Endothelial cell of umbilical vein (primary cell): ENCODE measurements at regions of chr11 and their contacts with region 1.

Region 1: DNA sequence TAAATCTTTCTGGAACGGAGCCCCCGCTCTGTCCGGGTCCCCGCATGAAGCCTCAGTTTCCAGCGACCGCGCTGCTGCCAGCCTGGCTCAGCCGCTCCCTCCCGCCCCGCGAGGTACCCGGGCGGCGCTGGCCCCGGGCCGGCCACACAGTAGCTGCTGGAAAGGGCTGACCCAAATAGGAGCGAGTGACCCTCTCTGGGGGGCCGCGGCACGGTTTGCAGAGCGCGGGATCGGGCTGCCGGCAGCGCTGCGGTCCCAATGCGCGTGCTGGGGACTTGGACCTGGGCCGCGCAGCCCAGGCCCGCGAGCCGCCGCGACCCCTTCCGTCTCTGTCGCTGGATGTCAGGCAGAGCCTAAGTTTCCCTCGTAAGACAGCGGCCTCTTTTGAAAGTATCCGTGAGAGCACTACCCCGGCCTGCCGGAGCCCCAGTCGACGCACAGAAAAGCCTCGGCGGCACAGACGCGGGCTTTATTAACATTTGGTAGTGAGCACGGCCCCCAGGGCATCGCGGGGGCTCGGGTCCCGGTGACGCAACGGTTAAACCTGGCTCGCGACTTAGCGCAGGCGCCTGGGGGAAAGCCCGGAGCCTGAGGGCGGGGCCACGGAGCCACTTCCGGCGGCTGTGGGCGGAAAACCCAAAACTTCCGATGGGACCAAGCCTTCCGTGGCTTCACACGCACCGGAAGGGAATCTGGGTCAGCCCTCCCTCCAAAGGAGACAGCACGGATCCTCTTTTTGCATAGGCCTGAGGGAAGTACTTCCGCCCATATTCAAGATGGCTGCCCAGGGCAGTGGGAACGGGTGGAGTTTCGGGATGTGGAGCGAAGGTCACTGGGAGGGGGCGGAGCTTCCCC is 14.9 kb downstream of the BAD start:
- DNase-seq: peak; percentile 100
- H3K4me3 ChIP-seq: peak overlapping the region; percentile 1 to 66 (median 58)
- H3K27ac ChIP-seq: peak overlapping the region; percentile 76
- H3K4me1 ChIP-seq: peaks cover 38% of the 10 kb centered on the region
- H3K27me3 ChIP-seq: no peaks in the 10 kb centered on the region
- CTCF ChIP-seq: no peak
- POLR2A ChIP-seq: peak; percentile 73

Region 2: GRCh38 chr11:63791495-63792167 is 478.0 kb before region 1 on chr11:
- CTCF ChIA-PET with region 1: no interaction called
- POLR2A ChIA-PET with region 1: no interaction called
- dilution Hi-C with region 1: no loop called
- intact Hi-C with region 1: no loop called
- DNase-seq: no peak
- H3K4me3 ChIP-seq: no peak overlapping the region
- H3K27ac ChIP-seq: no peak overlapping the region
- H3K4me1 ChIP-seq: no peaks in the 10 kb centered on the region
- H3K27me3 ChIP-seq: no peaks in the 10 kb centered on the region
- CTCF ChIP-seq: no peak
- POLR2A ChIP-seq: no peak

Region 3: GRCh38 chr11:64240394-64241174 is 29.0 kb before region 1 on chr11 and contains the start of gene FKBP2:
- CTCF ChIA-PET with region 1: interaction called, 8 read pairs
- POLR2A ChIA-PET with region 1: interaction called, 10 read pairs
- dilution Hi-C with region 1: no loop called
- intact Hi-C with region 1: no loop called
- DNase-seq: peak; percentile 97
- H3K4me3 ChIP-seq: peak within 1 kb of the TSS; percentile 67 to 93 (median 67)
- H3K27ac ChIP-seq: peak within 1 kb of the TSS; percentile 88
- H3K4me1 ChIP-seq: peaks cover 15% of the 10 kb centered on the region
- H3K27me3 ChIP-seq: no peaks in the 10 kb centered on the region
- CTCF ChIP-seq: no peak
- POLR2A ChIP-seq: peak; percentile 1
- total RNA-seq, gene FKBP2: 48.4 and 48.5 TPM in 2 replicates

Region 4: GRCh38 chr11:64284048-64284961 is 14.7 kb after region 1 on chr11 and contains the start of gene BAD:
- CTCF ChIA-PET with region 1: interaction called, 7 read pairs
- POLR2A ChIA-PET with region 1: interaction called, 3 read pairs
- dilution Hi-C with region 1: no loop called
- intact Hi-C with region 1: loop called (anchors 1 kb)
- DNase-seq: peak; percentile 91
- H3K4me3 ChIP-seq: peak within 1 kb of the TSS; percentile 42 to 49 (median 44)
- H3K27ac ChIP-seq: peak within 1 kb of the TSS; percentile 35
- H3K4me1 ChIP-seq: peaks cover 11% of the 10 kb centered on the region
- H3K27me3 ChIP-seq: no peaks in the 10 kb centered on the region
- CTCF ChIP-seq: no peak
- POLR2A ChIP-seq: peak; percentile 52
- total RNA-seq, gene BAD: 61.6 and 65.3 TPM in 2 replicates

Region 5: DNA sequence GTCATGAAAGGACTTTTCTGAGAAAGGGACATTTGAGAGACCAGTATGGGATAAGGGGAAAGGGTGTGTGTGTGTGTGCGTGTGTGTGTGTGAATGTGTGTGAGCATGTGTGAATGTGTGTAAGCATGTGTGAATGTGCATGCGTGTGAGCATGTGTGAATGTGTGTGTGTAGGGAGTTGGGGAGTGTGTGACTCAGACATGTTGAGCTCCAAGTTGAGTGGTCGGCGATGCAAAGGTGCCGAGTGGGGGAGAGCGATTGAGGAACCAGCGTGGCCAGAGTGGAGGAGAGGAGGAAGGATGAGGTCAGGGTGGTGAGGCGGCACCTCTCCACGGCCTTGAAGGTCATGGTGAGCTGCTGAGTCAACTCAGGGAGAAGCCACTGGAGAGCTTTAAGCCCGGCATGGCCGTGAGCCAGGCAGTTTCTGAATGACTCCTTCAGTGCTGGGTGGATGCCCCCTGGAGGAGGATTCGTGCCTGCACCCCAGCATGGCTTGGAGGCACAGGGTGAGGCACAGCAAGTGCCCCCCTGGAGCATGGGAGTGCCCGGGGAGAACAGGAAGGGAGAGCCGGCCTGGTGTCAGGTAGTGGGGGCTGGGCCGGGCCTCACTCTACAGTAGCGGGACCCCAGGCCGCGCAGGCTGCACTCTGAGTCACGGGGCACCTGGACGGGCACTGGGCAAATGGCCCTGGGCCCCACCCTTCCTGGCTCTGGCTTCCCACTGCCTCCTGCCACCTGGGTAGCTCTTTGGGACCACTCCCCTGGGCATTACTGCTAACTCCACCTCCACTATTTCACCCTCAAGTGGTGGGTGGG is 62.2 kb after region 1 on chr11:
- CTCF ChIA-PET with region 1: interaction called, 12 read pairs
- POLR2A ChIA-PET with region 1: no interaction called
- dilution Hi-C with region 1: no loop called
- intact Hi-C with region 1: no loop called
- DNase-seq: peak; percentile 74
- H3K4me3 ChIP-seq: no peak overlapping the region
- H3K27ac ChIP-seq: no peak overlapping the region
- H3K4me1 ChIP-seq: peaks cover 3% of the 10 kb centered on the region
- H3K27me3 ChIP-seq: no peaks in the 10 kb centered on the region
- CTCF ChIP-seq: peak; percentile 64 to 82
- POLR2A ChIP-seq: no peak

Region 6: GRCh38 chr11:64778508-64779346 is 509.1 kb after region 1 on chr11 and contains the start of gene SF1:
- CTCF ChIA-PET with region 1: no interaction called
- POLR2A ChIA-PET with region 1: no interaction called
- dilution Hi-C with region 1: no loop called
- intact Hi-C with region 1: loop called (anchors 2 kb)
- DNase-seq: peak; percentile 100
- H3K4me3 ChIP-seq: peak within 1 kb of the TSS; percentile 69 to 85 (median 75)
- H3K27ac ChIP-seq: peak within 1 kb of the TSS; percentile 80
- H3K4me1 ChIP-seq: peaks cover 22% of the 10 kb centered on the region
- H3K27me3 ChIP-seq: no peaks in the 10 kb centered on the region
- CTCF ChIP-seq: no peak
- POLR2A ChIP-seq: peak; percentile 72
- total RNA-seq, gene SF1: 322 and 342 TPM in 2 replicates